ENCODE measurements at regions of chr10 and their contacts with region 1.

Region 1: DNA sequence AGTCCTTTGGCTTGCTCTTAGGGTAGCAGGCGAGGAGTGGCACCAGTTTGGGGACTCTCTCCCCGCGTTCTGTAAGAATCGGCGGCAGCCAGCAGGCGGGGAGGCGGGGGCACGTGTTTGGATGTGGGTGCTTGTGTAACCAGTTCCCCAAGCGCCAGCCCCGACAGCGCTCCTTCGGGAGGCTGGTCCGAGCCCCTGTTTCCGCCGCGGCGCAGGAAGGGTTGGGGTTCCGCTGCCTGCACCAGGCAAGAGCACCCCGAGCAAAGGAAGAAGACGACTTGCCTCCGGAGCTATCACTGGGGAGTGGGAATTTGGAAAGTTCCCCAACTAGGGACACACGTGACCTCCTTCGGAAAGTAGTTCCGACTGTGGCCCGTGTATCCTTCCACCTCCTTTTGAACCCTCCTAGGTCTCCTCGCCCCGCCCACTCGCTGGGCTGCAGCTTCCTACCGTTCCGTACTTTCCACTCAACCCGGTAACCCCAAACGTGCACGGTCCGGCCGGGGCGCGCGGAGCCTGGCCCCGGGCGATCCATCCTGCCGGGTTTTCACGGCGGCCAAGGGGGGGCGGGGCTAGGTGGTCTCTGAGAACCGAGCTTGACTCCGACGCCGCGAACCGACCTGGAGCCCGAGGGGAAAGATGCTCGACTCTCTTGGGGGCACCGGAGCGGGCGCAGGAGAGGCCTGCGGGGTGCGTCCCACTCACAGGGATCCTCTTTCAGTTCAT is 1.2 kb downstream of the KLLN start:
- DNase-seq: peak; percentile 98
- H3K4me3 ChIP-seq: peak overlapping the region; percentile 69
- H3K4me3 Mint-ChIP-seq: peak overlapping the region; percentile 97
- H3K27ac Mint-ChIP-seq: peak overlapping the region; percentile 93
- H3K4me1 ChIP-seq: 0 out of 2 replicates have a peak, but pooled peaks cover 6% of the 10 kb centered on the region
- H3K4me1 Mint-ChIP-seq: peaks cover 29% of the 10 kb centered on the region
- H3K27me3 ChIP-seq: no peaks in the 10 kb centered on the region
- H3K27me3 Mint-ChIP-seq: no peaks in the 10 kb centered on the region
- CTCF ChIP-seq: no peak

Region 2: DNA sequence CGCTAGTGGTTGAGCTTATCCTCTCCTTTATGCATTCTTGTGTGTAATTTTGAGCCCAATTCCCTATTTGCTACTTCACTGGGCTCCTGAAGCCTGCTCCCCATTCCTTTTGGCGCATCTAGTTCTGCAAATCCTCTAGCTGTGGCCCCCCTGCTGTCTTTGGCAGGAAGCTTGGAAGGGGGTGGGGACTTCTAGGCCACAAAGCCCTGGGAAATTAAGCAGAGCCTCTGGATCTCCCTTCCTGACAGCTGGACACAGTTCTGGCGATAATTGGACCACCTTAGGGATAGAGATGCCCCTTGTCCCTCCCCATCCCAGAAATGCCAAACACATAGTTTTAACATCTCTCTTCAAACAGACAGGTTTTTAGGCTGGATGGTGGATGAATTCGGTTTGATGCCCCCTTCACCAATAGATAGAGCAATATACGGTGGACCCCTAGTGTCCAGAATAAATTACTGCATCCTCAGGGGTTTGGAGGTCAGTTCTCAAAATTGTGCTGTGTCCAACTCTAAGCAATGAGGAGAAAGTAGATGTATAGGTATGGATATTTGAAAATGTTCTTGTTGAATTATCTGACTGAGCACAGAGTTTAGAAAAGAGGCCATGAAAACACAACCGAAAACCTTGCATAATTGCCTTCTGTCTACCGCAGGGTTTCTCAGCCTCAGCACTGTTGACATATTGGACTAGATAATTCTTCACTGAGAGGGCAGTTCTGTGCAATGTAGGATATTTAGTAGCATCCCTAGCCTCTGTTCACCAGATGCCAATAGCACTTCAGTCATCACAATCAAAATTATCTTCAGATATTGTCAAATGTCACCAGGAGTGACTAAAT is 126.9 kb before region 1 on chr10:
- CTCF ChIA-PET with region 1: no interaction called
- POLR2A ChIA-PET with region 1: no interaction called
- intact Hi-C with region 1: no loop called
- DNase-seq: peak in 1 of 2 experiments; percentile 53
- H3K4me3 ChIP-seq: no peak overlapping the region
- H3K4me3 Mint-ChIP-seq: no peak overlapping the region
- H3K27ac Mint-ChIP-seq: no peak overlapping the region
- H3K4me1 ChIP-seq: 0 out of 2 replicates have a peak, but pooled peaks cover under 1% of the 10 kb centered on the region
- H3K4me1 Mint-ChIP-seq: no peaks in the 10 kb centered on the region
- H3K27me3 ChIP-seq: no peaks in the 10 kb centered on the region
- H3K27me3 Mint-ChIP-seq: no peaks in the 10 kb centered on the region
- CTCF ChIP-seq: peak; percentile 79

Region 3: GRCh38 chr10:87842776-87843497 is 19.2 kb before region 1 on chr10:
- CTCF ChIA-PET with region 1: no interaction called
- POLR2A ChIA-PET with region 1: interaction called, 10 read pairs
- intact Hi-C with region 1: loop called (anchors 2 kb)
- DNase-seq: no peak
- H3K4me3 ChIP-seq: no peak overlapping the region
- H3K4me3 Mint-ChIP-seq: peak overlapping the region; percentile 52
- H3K27ac Mint-ChIP-seq: peak overlapping the region; percentile 93
- H3K4me1 ChIP-seq: peaks cover 38% of the 10 kb centered on the region
- H3K4me1 Mint-ChIP-seq: peaks cover 23% of the 10 kb centered on the region
- H3K27me3 ChIP-seq: no peaks in the 10 kb centered on the region
- H3K27me3 Mint-ChIP-seq: no peaks in the 10 kb centered on the region
- CTCF ChIP-seq: no peak

Region 4: GRCh38 chr10:88019753-88020152 is 157.6 kb after region 1 on chr10:
- CTCF ChIA-PET with region 1: no interaction called
- POLR2A ChIA-PET with region 1: no interaction called
- intact Hi-C with region 1: no loop called
- DNase-seq: no peak
- H3K4me3 ChIP-seq: no peak overlapping the region
- H3K4me3 Mint-ChIP-seq: no peak overlapping the region
- H3K27ac Mint-ChIP-seq: no peak overlapping the region
- H3K4me1 ChIP-seq: no peaks in the 10 kb centered on the region
- H3K4me1 Mint-ChIP-seq: no peaks in the 10 kb centered on the region
- H3K27me3 ChIP-seq: no peaks in the 10 kb centered on the region
- H3K27me3 Mint-ChIP-seq: no peaks in the 10 kb centered on the region
- CTCF ChIP-seq: no peak

Region 5: DNA sequence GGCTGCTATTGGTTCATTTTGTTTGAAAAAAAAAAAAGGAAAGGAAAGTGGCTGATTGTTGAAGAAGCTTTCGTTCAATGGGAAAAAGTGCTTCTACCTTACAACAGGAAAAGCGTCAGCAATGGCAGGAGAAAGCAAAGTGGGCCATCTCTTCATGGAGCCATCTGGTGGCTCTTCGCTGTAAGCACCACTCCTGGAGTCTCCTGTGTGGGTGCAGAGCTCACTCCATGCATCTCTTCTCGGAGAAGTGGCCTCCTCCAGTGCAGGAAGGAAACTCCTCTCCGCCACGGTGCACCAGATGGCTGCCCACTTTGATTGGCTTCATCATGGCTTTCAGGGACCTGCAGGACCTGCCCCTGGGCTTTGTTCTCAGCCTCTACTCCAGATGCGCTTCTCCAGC is 252.3 kb after region 1 on chr10:
- CTCF ChIA-PET with region 1: interaction called, 13 read pairs
- POLR2A ChIA-PET with region 1: no interaction called
- intact Hi-C with region 1: loop called (anchors 1 kb)
- DNase-seq: peak; percentile 58 to 62
- H3K4me3 ChIP-seq: no peak overlapping the region
- H3K4me3 Mint-ChIP-seq: no peak overlapping the region
- H3K27ac Mint-ChIP-seq: no peak overlapping the region
- H3K4me1 ChIP-seq: peaks cover 2% of the 10 kb centered on the region; the same call in 1 of the 2 replicates
- H3K4me1 Mint-ChIP-seq: peaks cover 13% of the 10 kb centered on the region
- H3K27me3 ChIP-seq: no peaks in the 10 kb centered on the region
- H3K27me3 Mint-ChIP-seq: no peaks in the 10 kb centered on the region
- CTCF ChIP-seq: peak; percentile 64 to 84

Region 6: DNA sequence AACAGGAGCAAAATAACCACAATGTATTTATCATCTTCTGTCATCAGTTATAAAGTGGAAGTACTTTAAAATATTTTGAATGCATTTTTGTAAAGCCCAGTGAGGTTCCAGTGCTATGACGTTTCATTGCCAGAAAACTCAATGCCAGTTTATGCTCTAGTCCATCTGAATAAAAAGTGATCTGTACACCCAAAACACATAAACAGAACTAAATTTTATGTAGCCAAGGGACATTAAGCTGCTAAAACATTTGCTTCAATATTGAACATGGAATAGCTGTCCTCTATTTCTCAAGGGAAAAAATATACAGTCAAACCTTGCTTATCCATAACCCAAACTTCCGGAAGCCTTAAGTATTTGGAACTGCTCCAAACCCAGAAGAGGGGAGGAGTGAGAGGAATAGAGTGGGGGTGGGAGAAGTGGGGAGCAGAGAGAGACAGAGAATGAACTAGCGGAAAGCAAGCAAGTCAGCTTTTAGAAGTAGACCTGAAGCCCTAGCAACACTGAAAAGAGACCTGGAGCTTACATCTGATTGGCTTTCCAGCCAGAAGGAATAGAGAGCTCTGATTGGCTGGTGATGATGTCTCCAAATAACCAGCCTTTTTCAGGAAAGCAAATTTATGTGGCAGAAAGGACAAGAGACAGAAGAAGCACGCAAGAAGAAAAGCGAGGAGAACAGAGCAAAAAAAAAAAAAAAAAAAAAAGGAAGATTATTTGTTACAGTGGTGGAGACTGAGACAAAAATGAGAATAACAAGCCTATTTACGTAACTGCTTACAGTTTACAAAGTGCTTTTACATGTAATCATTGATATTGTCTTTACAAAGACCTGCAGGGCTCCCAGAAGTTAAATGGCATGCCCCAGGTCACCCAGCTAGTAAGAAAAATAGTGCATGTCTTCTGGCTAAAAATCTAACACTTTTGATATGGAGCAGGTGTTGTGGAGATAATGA is 525.0 kb after region 1 on chr10:
- CTCF ChIA-PET with region 1: interaction called, 5 read pairs
- POLR2A ChIA-PET with region 1: interaction called, 4 read pairs
- intact Hi-C with region 1: loop called (anchors 1 kb)
- DNase-seq: peak in 1 of 2 experiments; percentile 5
- H3K4me3 ChIP-seq: no peak overlapping the region
- H3K4me3 Mint-ChIP-seq: peak overlapping the region; percentile 64
- H3K27ac Mint-ChIP-seq: peak overlapping the region; percentile 44
- H3K4me1 ChIP-seq: peaks cover 23% of the 10 kb centered on the region
- H3K4me1 Mint-ChIP-seq: no peaks in the 10 kb centered on the region
- H3K27me3 ChIP-seq: no peaks in the 10 kb centered on the region
- H3K27me3 Mint-ChIP-seq: no peaks in the 10 kb centered on the region
- CTCF ChIP-seq: no peak